IMR-90 (cell line): ENCODE measurements at regions of chr11 and their contacts with region 1.

Region 1: DNA sequence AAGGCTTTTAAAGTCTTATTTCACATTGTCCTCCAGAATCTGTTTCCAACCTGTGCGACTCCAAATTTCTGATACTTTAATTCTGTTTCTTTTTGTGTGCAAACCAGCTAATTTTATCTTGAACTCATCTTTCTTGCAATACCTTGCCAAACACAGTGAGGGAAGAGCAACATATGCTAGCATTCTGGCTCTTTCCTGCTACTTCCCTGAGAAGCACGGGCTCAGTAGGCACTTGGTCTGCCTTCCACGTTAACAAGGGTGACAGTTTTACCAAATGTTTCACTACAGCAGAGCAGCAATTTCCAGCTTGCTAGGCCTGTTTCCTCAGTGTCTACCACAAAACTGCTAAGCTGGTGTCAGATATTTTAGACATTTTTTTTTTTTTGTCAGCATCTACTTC is 405.8 kb downstream of the NTM start:
- DNase-seq: no peak
- ATAC-seq: no peak
- H3K4me3 ChIP-seq: no peak overlapping the region
- H3K27ac ChIP-seq: no peak overlapping the region
- H3K4me1 ChIP-seq: no peaks in the 10 kb centered on the region
- H3K27me3 ChIP-seq: peaks cover 27% of the 10 kb centered on the region
- CTCF ChIP-seq: no peak
- POLR2A ChIP-seq: no peak
- RAD21 ChIP-seq: no peak

Region 2: DNA sequence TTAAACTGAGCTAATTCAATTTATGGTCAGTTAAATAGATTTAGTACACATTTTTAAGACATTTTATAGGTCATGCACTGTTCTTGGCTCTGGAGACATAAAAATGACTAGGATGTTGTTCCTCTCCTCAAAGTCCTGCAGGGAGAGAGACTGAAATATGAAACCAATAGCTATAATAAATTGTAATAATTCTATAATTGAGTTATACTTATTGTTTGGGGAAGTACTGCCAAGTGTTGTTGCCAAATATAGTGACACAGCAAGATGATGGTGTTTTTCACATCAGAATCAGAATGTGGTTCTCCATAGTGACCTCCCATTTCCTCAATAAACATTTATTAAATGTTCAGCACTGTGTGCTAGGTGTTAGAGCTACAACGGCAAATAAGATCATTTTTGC is 64.8 kb after region 1 on chr11:
- CTCF ChIA-PET with region 1: no interaction called
- POLR2A ChIA-PET with region 1: no interaction called
- dilution Hi-C with region 1: no loop called
- in situ Hi-C with region 1: no loop called
- intact Hi-C with region 1: loop called (anchors 5 kb)
- DNase-seq: no peak
- ATAC-seq: no peak
- H3K4me3 ChIP-seq: no peak overlapping the region
- H3K27ac ChIP-seq: no peak overlapping the region
- H3K4me1 ChIP-seq: no peaks in the 10 kb centered on the region
- H3K27me3 ChIP-seq: peaks cover 15% of the 10 kb centered on the region
- CTCF ChIP-seq: no peak
- POLR2A ChIP-seq: no peak
- RAD21 ChIP-seq: no peak